ENCODE measurements at regions of chr3 and their contacts with region 1.

Region 1: GRCh38 chr3:143443851-143444331 is 324.3 kb downstream of the CHST2 start:
- DNase-seq: peak; percentile 41
- ATAC-seq: no peak
- H3K4me3 Mint-ChIP-seq: no peak overlapping the region
- H3K27ac Mint-ChIP-seq: peak overlapping the region; percentile 17
- H3K4me1 Mint-ChIP-seq: peaks cover 19% of the 10 kb centered on the region
- H3K27me3 Mint-ChIP-seq: no peaks in the 10 kb centered on the region

Region 2: DNA sequence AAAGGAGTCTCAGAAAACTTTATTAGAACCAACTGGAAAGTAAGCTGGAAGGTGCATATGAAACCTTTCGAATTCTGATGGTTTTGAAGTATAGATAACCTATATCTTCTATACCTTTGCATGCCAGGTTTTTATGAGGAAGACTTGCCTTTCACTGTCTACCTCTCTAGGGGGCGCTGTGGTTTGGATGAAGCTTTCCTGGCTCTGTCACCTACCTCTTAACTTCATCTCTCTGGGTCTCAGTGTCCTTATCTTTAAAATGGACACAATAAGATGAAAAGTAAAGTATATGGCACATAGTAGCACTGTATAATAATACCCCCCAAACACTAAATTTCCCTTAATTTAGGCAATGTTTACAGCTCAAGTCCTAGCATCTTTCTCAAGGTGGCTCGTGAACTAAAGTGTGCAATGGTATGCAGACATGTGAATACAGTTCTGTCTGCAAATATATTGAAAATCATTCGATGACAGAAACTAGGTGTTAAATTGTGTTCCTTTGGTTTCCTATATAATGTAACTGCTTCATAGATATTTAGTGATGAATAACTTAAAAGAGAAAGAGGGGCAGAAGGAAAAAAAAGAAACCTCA is 10.0 kb before region 1 on chr3:
- CTCF ChIA-PET with region 1: interaction called, 16 read pairs
- POLR2A ChIA-PET with region 1: no interaction called
- DNase-seq: no peak
- ATAC-seq: no peak
- H3K4me3 Mint-ChIP-seq: no peak overlapping the region
- H3K27ac Mint-ChIP-seq: no peak overlapping the region
- H3K4me1 Mint-ChIP-seq: no peaks in the 10 kb centered on the region
- H3K27me3 Mint-ChIP-seq: no peaks in the 10 kb centered on the region

Region 3: GRCh38 chr3:143464850-143465249 is 21.0 kb after region 1 on chr3:
- CTCF ChIA-PET with region 1: no interaction called
- POLR2A ChIA-PET with region 1: no interaction called
- DNase-seq: no peak
- ATAC-seq: no peak
- H3K4me3 Mint-ChIP-seq: no peak overlapping the region
- H3K27ac Mint-ChIP-seq: no peak overlapping the region
- H3K4me1 Mint-ChIP-seq: peaks cover 3% of the 10 kb centered on the region
- H3K27me3 Mint-ChIP-seq: no peaks in the 10 kb centered on the region